CD8-positive, alpha-beta T cell (primary cell): ENCODE measurements at regions of chr11 and their contacts with region 1.

Region 1: DNA sequence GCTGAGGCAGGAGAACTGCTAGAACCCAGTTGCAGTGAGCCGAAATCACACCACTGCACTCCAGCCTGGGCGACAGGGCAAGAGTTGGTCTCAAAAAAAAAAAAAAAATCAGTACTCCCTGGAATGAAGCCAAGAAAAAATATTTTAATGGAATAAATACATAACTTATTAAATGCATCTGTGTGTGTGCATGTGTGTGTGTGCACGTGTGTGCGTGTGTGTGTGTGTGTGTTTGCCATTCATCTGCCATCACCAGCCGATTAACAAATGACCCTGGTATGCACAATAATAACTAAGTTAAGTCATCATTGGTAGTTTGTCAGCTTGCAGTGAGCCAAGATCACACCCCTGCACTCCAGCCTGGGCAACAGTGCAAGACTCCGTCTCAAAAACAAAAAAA is 35.0 kb upstream of the SCGB1A1 start:
- DNase-seq: no peak
- ATAC-seq: no peak
- H3K4me3 ChIP-seq: no peak overlapping the region
- H3K4me3 Mint-ChIP-seq: no peak overlapping the region
- H3K27ac ChIP-seq: no peak overlapping the region
- H3K27ac Mint-ChIP-seq: no peak overlapping the region
- H3K4me1 ChIP-seq: peaks cover 9% of the 10 kb centered on the region
- H3K4me1 Mint-ChIP-seq: peaks cover 9% of the 10 kb centered on the region
- H3K27me3 ChIP-seq: no peaks in the 10 kb centered on the region
- H3K27me3 Mint-ChIP-seq: no peaks in the 10 kb centered on the region
- CTCF ChIP-seq: no peak

Region 2: GRCh38 chr11:62337303-62338181 is 46.3 kb before region 1 on chr11 and contains the start of gene ASRGL1:
- CTCF ChIA-PET with region 1: interaction called, 15 read pairs
- POLR2A ChIA-PET with region 1: no interaction called
- intact Hi-C with region 1: no loop called
- DNase-seq: peak; percentile 51 to 85 (median 78)
- ATAC-seq: peak; percentile 86
- H3K4me3 ChIP-seq: peak within 1 kb of the TSS; percentile 58 to 65
- H3K4me3 Mint-ChIP-seq: peak within 1 kb of the TSS; percentile 89
- H3K27ac ChIP-seq: no peak within 1 kb of the TSS
- H3K27ac Mint-ChIP-seq: peak within 1 kb of the TSS; percentile 57
- H3K4me1 ChIP-seq: peaks cover 5% of the 10 kb centered on the region
- H3K4me1 Mint-ChIP-seq: peaks cover 17% of the 10 kb centered on the region
- H3K27me3 ChIP-seq: peaks cover 0 to 2% of the 10 kb centered on the region in 2 experiments
- H3K27me3 Mint-ChIP-seq: peaks cover 3% of the 10 kb centered on the region
- CTCF ChIP-seq: no peak
- total RNA-seq, gene ASRGL1: 1.0 to 1.2 TPM

Region 3: DNA sequence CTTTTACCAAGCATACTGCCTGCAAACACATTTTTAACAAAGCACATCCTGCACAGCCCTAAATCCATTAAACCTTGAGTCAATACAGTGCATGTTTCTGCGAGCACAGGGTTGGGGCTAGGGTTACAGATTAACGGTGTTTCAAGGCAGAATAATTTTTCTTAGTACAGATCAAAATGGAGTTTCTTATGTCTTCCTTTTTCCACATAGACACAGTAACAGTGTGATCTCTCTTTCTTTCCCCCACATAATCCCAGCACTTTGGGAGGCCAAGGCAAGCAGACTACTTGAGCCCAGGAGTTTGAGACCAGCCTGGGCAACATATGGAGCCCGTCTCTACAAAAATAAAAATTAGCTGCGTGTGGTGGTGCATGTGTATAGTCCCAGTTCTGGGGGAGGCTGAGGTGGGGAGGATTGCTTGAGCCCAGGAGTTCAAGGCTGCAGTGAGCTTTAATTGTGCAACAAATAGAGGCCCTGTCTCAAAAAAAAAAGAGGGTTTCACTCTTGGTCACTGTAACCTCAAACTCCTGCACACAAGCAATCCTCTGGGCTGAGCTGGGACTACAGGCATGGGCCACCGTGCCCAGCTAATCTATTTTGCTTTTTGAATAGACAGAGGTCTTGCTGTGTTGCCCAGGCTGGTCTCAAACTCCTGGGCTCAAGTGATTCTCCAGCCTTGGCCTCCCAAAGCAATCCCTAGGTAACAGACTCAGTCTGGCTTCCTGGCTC is 477.2 kb after region 1 on chr11:
- CTCF ChIA-PET with region 1: no interaction called
- POLR2A ChIA-PET with region 1: no interaction called
- intact Hi-C with region 1: loop called (anchors 2 to 5 kb)
- DNase-seq: no peak
- ATAC-seq: no peak
- H3K4me3 ChIP-seq: no peak overlapping the region
- H3K4me3 Mint-ChIP-seq: no peak overlapping the region
- H3K27ac ChIP-seq: no peak overlapping the region
- H3K27ac Mint-ChIP-seq: no peak overlapping the region
- H3K4me1 ChIP-seq: peaks cover 6% of the 10 kb centered on the region
- H3K4me1 Mint-ChIP-seq: peaks cover 21% of the 10 kb centered on the region
- H3K27me3 ChIP-seq: no peaks in the 10 kb centered on the region
- H3K27me3 Mint-ChIP-seq: no peaks in the 10 kb centered on the region
- CTCF ChIP-seq: no peak